ENCODE measurements at regions of chr10 and their contacts with region 1.

Region 1: GRCh38 chr10:66931340-66931948 is 5.6 kb downstream of the LRRTM3 start:
- DNase-seq: peak in 1 of 2 experiments; percentile 64
- H3K4me3 ChIP-seq: no peak overlapping the region
- H3K4me3 Mint-ChIP-seq: no peak overlapping the region
- H3K27ac Mint-ChIP-seq: no peak overlapping the region
- H3K4me1 ChIP-seq: no peaks in the 10 kb centered on the region
- H3K4me1 Mint-ChIP-seq: no peaks in the 10 kb centered on the region
- H3K27me3 ChIP-seq: no peaks in the 10 kb centered on the region; the same call in 1 of the 2 replicates
- H3K27me3 Mint-ChIP-seq: peaks cover 24% of the 10 kb centered on the region
- CTCF ChIP-seq: peak; percentile 93 to 96

Region 2: DNA sequence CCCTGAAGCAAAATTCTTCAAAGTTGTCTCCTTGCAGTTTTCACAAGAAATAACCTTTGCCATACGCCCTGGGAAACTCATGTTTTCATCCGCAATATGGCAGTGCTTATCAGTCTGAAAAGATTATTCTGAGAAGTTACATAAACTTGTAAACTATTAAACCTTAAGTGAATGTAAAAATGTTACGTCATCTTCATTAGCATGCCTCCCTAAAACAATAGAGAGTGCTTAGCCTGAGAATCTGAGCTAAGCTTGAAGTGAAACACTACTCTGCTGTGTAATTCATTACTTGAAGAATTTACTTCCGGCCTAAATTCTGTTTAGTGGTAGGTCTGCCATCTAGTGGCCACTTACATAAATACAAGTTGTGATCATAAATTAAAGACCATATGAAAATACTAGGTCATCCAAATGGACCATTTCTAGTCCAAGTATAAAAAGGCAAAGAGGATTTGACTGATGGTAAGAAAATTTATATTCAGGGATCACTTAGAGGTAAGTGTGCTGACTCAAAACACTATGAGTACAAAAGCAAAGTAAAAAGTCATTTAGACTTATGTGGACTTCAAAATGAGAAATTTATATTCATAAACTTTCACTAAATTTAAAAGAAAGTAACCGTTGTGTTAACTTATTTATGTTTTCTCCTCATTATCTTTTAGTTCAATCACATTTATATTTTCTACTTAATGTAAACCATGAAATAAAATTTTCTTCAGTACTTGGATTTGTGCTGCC is 750.7 kb before region 1 on chr10:
- CTCF ChIA-PET with region 1: no interaction called
- POLR2A ChIA-PET with region 1: no interaction called
- intact Hi-C with region 1: loop called (anchors 1 kb)
- DNase-seq: peak in 1 of 2 experiments; percentile 73
- H3K4me3 ChIP-seq: no peak overlapping the region
- H3K4me3 Mint-ChIP-seq: no peak overlapping the region
- H3K27ac Mint-ChIP-seq: no peak overlapping the region
- H3K4me1 ChIP-seq: no peaks in the 10 kb centered on the region
- H3K4me1 Mint-ChIP-seq: no peaks in the 10 kb centered on the region
- H3K27me3 ChIP-seq: no peaks in the 10 kb centered on the region
- H3K27me3 Mint-ChIP-seq: no peaks in the 10 kb centered on the region
- CTCF ChIP-seq: peak; percentile 73 to 89

Region 3: GRCh38 chr10:66455304-66455703 is 476.1 kb before region 1 on chr10:
- CTCF ChIA-PET with region 1: no interaction called
- POLR2A ChIA-PET with region 1: no interaction called
- intact Hi-C with region 1: loop called (anchors 1 kb)
- DNase-seq: peak in 1 of 2 experiments; percentile 29
- H3K4me3 ChIP-seq: no peak overlapping the region
- H3K4me3 Mint-ChIP-seq: no peak overlapping the region
- H3K27ac Mint-ChIP-seq: no peak overlapping the region
- H3K4me1 ChIP-seq: no peaks in the 10 kb centered on the region
- H3K4me1 Mint-ChIP-seq: no peaks in the 10 kb centered on the region
- H3K27me3 ChIP-seq: no peaks in the 10 kb centered on the region
- H3K27me3 Mint-ChIP-seq: no peaks in the 10 kb centered on the region
- CTCF ChIP-seq: peak; percentile 29 to 35

Region 4: GRCh38 chr10:66917104-66917503 is 14.3 kb before region 1 on chr10:
- CTCF ChIA-PET with region 1: interaction called, 3 read pairs
- POLR2A ChIA-PET with region 1: no interaction called
- intact Hi-C with region 1: loop called (anchors 1 kb)
- DNase-seq: no peak
- H3K4me3 ChIP-seq: no peak overlapping the region
- H3K4me3 Mint-ChIP-seq: no peak overlapping the region
- H3K27ac Mint-ChIP-seq: no peak overlapping the region
- H3K4me1 ChIP-seq: no peaks in the 10 kb centered on the region
- H3K4me1 Mint-ChIP-seq: no peaks in the 10 kb centered on the region
- H3K27me3 ChIP-seq: no peaks in the 10 kb centered on the region
- H3K27me3 Mint-ChIP-seq: peaks cover 6% of the 10 kb centered on the region
- CTCF ChIP-seq: peak in 1 of 2 experiments; percentile 31

Region 5: GRCh38 chr10:67520924-67521520 is 589.6 kb after region 1 on chr10:
- CTCF ChIA-PET with region 1: interaction called, 17 read pairs
- POLR2A ChIA-PET with region 1: no interaction called
- intact Hi-C with region 1: loop called (anchors 2 kb)
- DNase-seq: peak; percentile 56 to 74
- H3K4me3 ChIP-seq: no peak overlapping the region
- H3K4me3 Mint-ChIP-seq: no peak overlapping the region
- H3K27ac Mint-ChIP-seq: no peak overlapping the region
- H3K4me1 ChIP-seq: peaks cover 4% of the 10 kb centered on the region; the same call in 1 of the 2 replicates
- H3K4me1 Mint-ChIP-seq: peaks cover 6% of the 10 kb centered on the region
- H3K27me3 ChIP-seq: no peaks in the 10 kb centered on the region
- H3K27me3 Mint-ChIP-seq: no peaks in the 10 kb centered on the region
- CTCF ChIP-seq: peak; percentile 92 to 96